ENCODE measurements at regions of chr19 and their contacts with region 1.

Region 1: GRCh38 chr19:16070366-16070990 is 5.8 kb upstream of the TPM4 start:
- DNase-seq: peak; percentile 95
- ATAC-seq: peak; percentile 91
- H3K4me3 ChIP-seq: peak overlapping the region in 4 of 5 experiments; percentile 30 to 56 (median 43)
- H3K4me3 Mint-ChIP-seq: no peak overlapping the region
- H3K27ac ChIP-seq: peak overlapping the region; percentile 96 to 98
- H3K27ac Mint-ChIP-seq: no peak overlapping the region
- H3K4me1 ChIP-seq: peaks cover 23 to 42% of the 10 kb centered on the region in 2 donors
- H3K4me1 Mint-ChIP-seq: peaks cover 26% of the 10 kb centered on the region
- H3K27me3 ChIP-seq: no peaks in the 10 kb centered on the region
- H3K27me3 Mint-ChIP-seq: no peaks in the 10 kb centered on the region
- CTCF ChIP-seq: peak; percentile 37

Region 2: GRCh38 chr19:15779756-15780476 is 290.6 kb before region 1 on chr19:
- CTCF ChIA-PET with region 1: no interaction called
- POLR2A ChIA-PET with region 1: no interaction called
- intact Hi-C with region 1: no loop called
- DNase-seq: no peak
- ATAC-seq: no peak
- H3K4me3 ChIP-seq: no peak overlapping the region
- H3K4me3 Mint-ChIP-seq: no peak overlapping the region
- H3K27ac ChIP-seq: no peak overlapping the region
- H3K27ac Mint-ChIP-seq: no peak overlapping the region
- H3K4me1 ChIP-seq: no peaks in the 10 kb centered on the region
- H3K4me1 Mint-ChIP-seq: no peaks in the 10 kb centered on the region
- H3K27me3 ChIP-seq: peaks cover 0 to 12% (median 1%) of the 10 kb centered on the region in 4 experiments
- H3K27me3 Mint-ChIP-seq: peaks cover 25% of the 10 kb centered on the region
- CTCF ChIP-seq: no peak

Region 3: DNA sequence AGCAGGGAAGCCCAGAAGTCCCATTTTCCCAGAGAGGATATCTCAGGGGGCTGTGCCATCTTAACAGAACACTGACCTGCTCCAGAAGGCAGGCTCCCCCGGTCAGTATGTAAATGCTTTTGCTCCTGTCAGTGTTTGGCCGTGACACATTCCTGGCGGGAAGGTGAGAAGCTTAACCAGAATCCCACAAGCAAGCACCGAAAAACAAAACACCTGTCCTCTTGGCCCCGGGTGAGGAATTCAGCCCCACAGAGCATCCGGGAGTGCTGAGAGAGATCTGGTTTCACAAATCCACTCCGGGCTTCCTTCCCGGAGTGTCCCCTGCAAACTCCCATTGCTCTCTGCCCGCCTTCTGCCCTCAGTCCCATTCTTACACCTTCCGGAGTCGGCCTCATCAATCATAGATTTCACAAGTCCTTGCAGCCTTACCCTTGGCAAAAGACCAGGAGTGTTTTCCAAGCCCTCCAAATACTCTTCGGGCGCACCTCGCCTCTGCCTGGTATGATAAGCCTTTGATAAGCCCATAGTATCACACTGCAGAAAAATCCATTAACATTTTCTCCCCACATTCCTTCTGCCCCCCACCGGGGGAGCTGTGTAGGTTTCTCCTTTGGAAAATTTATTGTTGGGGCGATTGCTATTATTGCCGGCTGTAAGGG is 18.0 kb after region 1 on chr19:
- CTCF ChIA-PET with region 1: interaction called, 57 read pairs
- POLR2A ChIA-PET with region 1: interaction called, 6 read pairs
- intact Hi-C with region 1: no loop called
- DNase-seq: no peak
- ATAC-seq: no peak
- H3K4me3 ChIP-seq: no peak overlapping the region
- H3K4me3 Mint-ChIP-seq: no peak overlapping the region
- H3K27ac ChIP-seq: no peak overlapping the region
- H3K27ac Mint-ChIP-seq: peak overlapping the region; percentile 41
- H3K4me1 ChIP-seq: peaks cover 18 to 27% of the 10 kb centered on the region in 2 donors
- H3K4me1 Mint-ChIP-seq: peaks cover 24% of the 10 kb centered on the region
- H3K27me3 ChIP-seq: no peaks in the 10 kb centered on the region
- H3K27me3 Mint-ChIP-seq: no peaks in the 10 kb centered on the region
- CTCF ChIP-seq: no peak

Region 4: GRCh38 chr19:16153582-16154336 is 83.3 kb after region 1 on chr19:
- CTCF ChIA-PET with region 1: interaction called, 3 read pairs
- POLR2A ChIA-PET with region 1: interaction called, 13 read pairs
- intact Hi-C with region 1: no loop called
- DNase-seq: no peak
- ATAC-seq: no peak
- H3K4me3 ChIP-seq: no peak overlapping the region
- H3K4me3 Mint-ChIP-seq: no peak overlapping the region
- H3K27ac ChIP-seq: peak overlapping the region in 1 of 2 donors; percentile 49
- H3K27ac Mint-ChIP-seq: peak overlapping the region; percentile 15
- H3K4me1 ChIP-seq: peaks cover 41 to 63% of the 10 kb centered on the region in 2 donors
- H3K4me1 Mint-ChIP-seq: peaks cover 50% of the 10 kb centered on the region
- H3K27me3 ChIP-seq: no peaks in the 10 kb centered on the region
- H3K27me3 Mint-ChIP-seq: no peaks in the 10 kb centered on the region
- CTCF ChIP-seq: no peak

Region 5: DNA sequence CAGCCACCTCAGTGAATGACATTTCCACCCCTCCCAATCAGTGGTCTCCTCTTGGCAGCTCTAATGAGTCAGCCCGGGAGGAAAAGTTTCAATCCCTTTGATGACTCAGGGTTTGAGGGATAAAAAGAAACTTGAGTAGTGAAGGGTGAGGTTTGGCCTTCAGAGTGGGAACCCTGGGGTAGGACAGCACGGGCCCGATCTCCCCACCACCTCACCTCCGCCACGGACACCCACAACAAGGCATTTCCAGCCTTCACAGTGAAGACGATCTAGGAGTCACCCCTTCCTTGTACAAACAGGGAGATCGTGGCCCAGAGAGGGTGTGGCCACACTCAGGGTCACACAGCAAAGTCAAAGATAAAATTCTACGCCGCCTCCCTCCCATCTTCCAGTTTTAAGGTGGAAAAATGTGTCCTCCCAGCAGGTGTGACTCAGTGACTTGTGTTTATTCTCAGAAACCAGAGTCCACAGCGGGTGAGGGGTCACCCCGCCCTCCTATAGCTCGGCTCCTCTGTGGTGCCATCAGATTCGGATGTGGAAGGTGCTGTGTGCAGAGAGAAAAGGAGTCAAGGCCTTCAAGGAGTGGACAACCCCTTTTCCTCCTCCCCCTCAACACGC is 90.6 kb after region 1 on chr19:
- CTCF ChIA-PET with region 1: no interaction called
- POLR2A ChIA-PET with region 1: interaction called, 13 read pairs
- intact Hi-C with region 1: no loop called
- DNase-seq: no peak
- ATAC-seq: no peak
- H3K4me3 ChIP-seq: no peak overlapping the region
- H3K4me3 Mint-ChIP-seq: no peak overlapping the region
- H3K27ac ChIP-seq: no peak overlapping the region
- H3K27ac Mint-ChIP-seq: peak overlapping the region; percentile 46
- H3K4me1 ChIP-seq: peaks cover 0 to under 1% of the 10 kb centered on the region in 2 donors
- H3K4me1 Mint-ChIP-seq: peaks cover 6% of the 10 kb centered on the region
- H3K27me3 ChIP-seq: no peaks in the 10 kb centered on the region
- H3K27me3 Mint-ChIP-seq: no peaks in the 10 kb centered on the region
- CTCF ChIP-seq: no peak

Region 6: GRCh38 chr19:16197622-16198369 is 127.3 kb after region 1 on chr19 and contains the start of gene AP1M1:
- CTCF ChIA-PET with region 1: no interaction called
- POLR2A ChIA-PET with region 1: no interaction called
- intact Hi-C with region 1: no loop called
- DNase-seq: peak; percentile 99
- ATAC-seq: peak; percentile 93
- H3K4me3 ChIP-seq: peak within 1 kb of the TSS; percentile 67 to 92 (median 87)
- H3K4me3 Mint-ChIP-seq: peak within 1 kb of the TSS; percentile 93
- H3K27ac ChIP-seq: peak within 1 kb of the TSS; percentile 66 to 92
- H3K27ac Mint-ChIP-seq: peak within 1 kb of the TSS; percentile 98
- H3K4me1 ChIP-seq: peaks cover 18 to 28% of the 10 kb centered on the region in 2 donors
- H3K4me1 Mint-ChIP-seq: peaks cover 35% of the 10 kb centered on the region
- H3K27me3 ChIP-seq: no peaks in the 10 kb centered on the region
- H3K27me3 Mint-ChIP-seq: no peaks in the 10 kb centered on the region
- CTCF ChIP-seq: no peak
- total RNA-seq, gene AP1M1: 90.4 and 102 TPM in 2 replicates

Measured in B cell (primary cell).